Endothelial cell of umbilical vein (primary cell): ENCODE measurements at regions of chr5 and their contacts with region 1.

Region 1: GRCh38 chr5:173057062-173057924 is 1.1 kb downstream of the CREBRF start:
- DNase-seq: peak; percentile 99
- H3K4me3 ChIP-seq: peak overlapping the region; percentile 83 to 89 (median 86)
- H3K27ac ChIP-seq: peak overlapping the region; percentile 86
- H3K4me1 ChIP-seq: peaks cover 13% of the 10 kb centered on the region
- H3K27me3 ChIP-seq: no peaks in the 10 kb centered on the region
- CTCF ChIP-seq: peak in 1 of 2 donors; percentile 28
- POLR2A ChIP-seq: peak; percentile 37

Region 2: DNA sequence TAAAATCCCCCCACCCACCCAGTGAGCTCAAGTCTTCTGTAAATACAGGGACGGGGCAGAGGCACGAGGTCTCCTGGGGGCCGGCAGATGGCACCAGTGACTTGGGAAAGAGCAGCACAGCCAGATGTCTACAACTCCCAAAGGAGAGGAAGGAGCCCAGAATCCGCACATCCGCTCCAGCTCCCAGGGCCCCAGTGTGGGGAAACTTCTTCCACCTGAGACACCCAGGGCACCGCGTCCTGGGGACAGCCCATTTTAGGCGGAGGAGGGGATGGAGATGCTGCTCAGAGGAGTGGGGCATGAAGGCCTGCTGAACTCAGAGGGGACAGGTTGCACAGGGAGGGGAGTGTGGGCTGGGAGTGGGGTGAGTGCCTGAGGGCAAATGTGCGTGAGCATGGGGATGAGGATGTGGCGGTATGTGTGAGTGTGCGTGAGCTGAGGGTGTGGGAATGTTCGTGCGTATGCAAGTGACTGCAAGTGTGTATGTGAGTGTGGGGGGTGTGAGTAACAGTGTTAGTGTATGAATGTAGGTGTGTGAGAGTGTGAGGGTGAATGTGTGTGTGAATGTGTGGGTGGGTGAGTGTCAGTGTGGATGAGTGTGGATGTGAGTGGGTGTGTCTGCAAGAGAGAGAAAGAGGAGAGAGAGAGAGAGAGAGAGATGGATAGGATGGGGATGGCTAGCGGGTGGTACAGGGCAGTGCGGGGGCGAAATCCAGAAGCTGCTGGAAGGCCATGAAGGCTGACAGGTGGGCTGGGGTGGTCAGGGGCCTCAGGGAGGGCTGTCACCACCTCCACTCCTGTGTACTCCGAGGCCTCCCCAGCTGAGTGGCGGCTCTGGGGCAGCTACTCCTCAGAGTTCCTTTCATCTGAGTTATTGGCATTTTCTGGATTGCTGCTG is 349.8 kb before region 1 on chr5:
- CTCF ChIA-PET with region 1: interaction called, 4 read pairs
- POLR2A ChIA-PET with region 1: no interaction called
- dilution Hi-C with region 1: no loop called
- intact Hi-C with region 1: loop called (anchors 2 kb)
- DNase-seq: peak; percentile 62
- H3K4me3 ChIP-seq: no peak overlapping the region
- H3K27ac ChIP-seq: no peak overlapping the region
- H3K4me1 ChIP-seq: no peaks in the 10 kb centered on the region
- H3K27me3 ChIP-seq: no peaks in the 10 kb centered on the region
- CTCF ChIP-seq: peak; percentile 61 to 64
- POLR2A ChIP-seq: no peak

Region 3: DNA sequence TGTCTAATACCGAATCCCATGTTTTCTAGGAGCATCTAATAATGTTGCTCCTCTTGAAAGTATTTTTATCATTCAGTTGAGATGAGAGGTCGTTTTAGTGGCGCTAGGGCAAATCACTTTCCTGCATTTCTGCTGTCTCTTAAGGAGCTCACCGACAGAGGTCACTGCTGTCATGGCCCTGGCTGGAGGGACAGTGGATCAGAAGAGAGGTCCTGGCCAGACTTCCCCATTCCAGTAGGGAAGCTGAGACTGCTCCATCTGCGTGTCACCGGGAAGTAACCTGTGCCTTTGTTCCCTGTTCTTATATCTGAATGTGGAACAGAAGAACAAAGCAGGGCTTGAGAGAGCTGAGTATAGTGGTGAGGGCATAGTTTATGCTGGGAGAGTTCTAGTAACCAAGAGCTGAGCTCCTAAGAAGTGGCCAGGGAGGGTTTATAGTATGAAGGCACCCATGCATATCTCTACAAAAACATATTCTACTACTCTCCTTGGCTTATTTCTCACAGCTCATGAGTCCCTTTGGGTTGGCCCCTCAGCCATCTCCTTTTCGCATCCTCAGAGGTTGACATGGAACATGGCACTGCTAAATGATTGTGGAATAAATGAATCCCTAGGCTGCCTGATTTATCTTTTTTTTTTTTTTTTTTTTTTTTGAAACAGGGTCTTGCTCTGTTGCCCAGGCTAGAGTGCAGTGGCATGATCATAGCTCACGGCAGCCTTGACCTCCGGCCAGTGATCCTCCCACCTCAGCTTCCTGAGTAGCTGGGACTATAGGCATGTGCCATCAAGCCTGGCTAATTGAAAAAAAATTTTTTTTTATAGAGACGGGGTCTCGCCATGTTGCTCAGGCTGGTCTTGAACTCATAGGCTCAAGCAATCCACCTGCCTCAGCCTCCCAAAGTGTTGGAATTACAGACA is 46.5 kb before region 1 on chr5:
- CTCF ChIA-PET with region 1: interaction called, 14 read pairs
- POLR2A ChIA-PET with region 1: interaction called, 3 read pairs
- dilution Hi-C with region 1: no loop called
- intact Hi-C with region 1: loop called (anchors 1 kb)
- DNase-seq: peak; percentile 75
- H3K4me3 ChIP-seq: no peak overlapping the region
- H3K27ac ChIP-seq: no peak overlapping the region
- H3K4me1 ChIP-seq: peaks cover 2% of the 10 kb centered on the region
- H3K27me3 ChIP-seq: no peaks in the 10 kb centered on the region
- CTCF ChIP-seq: peak; percentile 41 to 52
- POLR2A ChIP-seq: no peak

Region 4: DNA sequence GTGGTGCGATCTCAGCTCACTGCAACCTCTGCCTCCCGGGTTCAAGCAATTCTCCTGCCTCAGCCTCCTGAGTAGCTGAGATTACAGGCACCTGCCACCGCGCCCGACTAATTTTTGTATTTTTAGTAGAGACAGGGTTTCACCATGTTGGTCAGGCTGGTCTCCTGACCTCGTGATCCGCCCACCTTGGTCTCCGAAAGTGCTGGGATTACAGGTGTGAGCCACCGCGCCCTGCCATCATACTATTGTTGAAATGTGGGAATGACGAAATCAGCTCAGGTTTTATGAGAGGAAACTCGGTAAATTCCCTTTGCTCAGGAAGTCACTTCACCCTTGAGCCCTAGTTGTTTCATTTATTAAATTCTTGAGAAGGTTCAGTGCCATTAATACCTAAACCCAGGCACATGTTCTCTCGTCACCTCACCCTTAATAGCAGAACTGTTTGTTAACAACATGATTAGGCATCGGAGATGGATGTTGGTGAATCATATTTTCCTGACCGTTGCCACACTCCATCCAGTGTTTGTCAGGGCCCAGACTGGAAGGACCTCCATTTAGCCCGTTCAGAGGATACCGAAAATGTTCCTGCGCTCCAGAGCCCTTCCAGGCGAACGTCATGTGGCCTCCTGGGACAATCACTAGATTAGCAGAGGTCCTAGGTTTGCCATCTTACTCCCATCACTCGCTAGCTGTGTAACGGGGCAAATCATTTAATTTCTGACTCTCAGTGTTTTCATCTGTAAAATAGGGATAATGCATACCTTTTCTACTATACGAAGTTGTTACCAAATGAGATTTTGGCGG is 21.2 kb before region 1 on chr5:
- CTCF ChIA-PET with region 1: interaction called, 10 read pairs
- POLR2A ChIA-PET with region 1: no interaction called
- dilution Hi-C with region 1: no loop called
- intact Hi-C with region 1: no loop called
- DNase-seq: peak; percentile 36
- H3K4me3 ChIP-seq: no peak overlapping the region
- H3K27ac ChIP-seq: peak overlapping the region; percentile 36
- H3K4me1 ChIP-seq: peaks cover 14% of the 10 kb centered on the region
- H3K27me3 ChIP-seq: no peaks in the 10 kb centered on the region
- CTCF ChIP-seq: no peak
- POLR2A ChIP-seq: no peak

Region 5: DNA sequence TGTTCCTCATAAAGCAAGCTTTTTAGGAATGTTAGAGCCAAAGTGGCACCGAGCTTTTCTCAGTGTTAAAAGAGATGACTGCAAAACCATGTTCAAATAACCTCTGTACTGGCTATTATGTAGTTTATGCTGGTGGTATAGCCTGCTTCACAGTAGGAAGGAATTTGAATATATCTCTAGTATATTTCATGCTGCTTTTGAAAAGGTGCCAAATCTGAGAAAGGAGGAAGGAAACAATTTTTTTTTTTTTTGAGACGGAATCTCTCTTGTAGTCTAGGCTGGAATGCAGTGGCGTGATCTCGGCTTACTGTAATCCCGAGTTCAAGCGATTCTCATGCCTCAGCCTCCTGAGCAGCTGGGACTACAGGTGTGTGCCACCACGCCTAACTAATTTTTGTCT is 12.4 kb after region 1 on chr5:
- CTCF ChIA-PET with region 1: no interaction called
- POLR2A ChIA-PET with region 1: no interaction called
- dilution Hi-C with region 1: no loop called
- intact Hi-C with region 1: no loop called
- DNase-seq: peak; percentile 51
- H3K4me3 ChIP-seq: no peak overlapping the region
- H3K27ac ChIP-seq: no peak overlapping the region
- H3K4me1 ChIP-seq: no peaks in the 10 kb centered on the region
- H3K27me3 ChIP-seq: no peaks in the 10 kb centered on the region
- CTCF ChIP-seq: no peak
- POLR2A ChIP-seq: no peak

Region 6: GRCh38 chr5:173144200-173145176 is 87.2 kb after region 1 on chr5 and contains the start of gene BNIP1:
- CTCF ChIA-PET with region 1: interaction called, 11 read pairs
- POLR2A ChIA-PET with region 1: interaction called, 5 read pairs
- dilution Hi-C with region 1: no loop called
- intact Hi-C with region 1: loop called (anchors 1 kb)
- DNase-seq: peak; percentile 95
- H3K4me3 ChIP-seq: peak within 1 kb of the TSS; percentile 77 to 97 (median 89)
- H3K27ac ChIP-seq: peak within 1 kb of the TSS; percentile 89
- H3K4me1 ChIP-seq: peaks cover 4% of the 10 kb centered on the region
- H3K27me3 ChIP-seq: no peaks in the 10 kb centered on the region
- CTCF ChIP-seq: peak; percentile 98
- POLR2A ChIP-seq: peak; percentile 73
- total RNA-seq, gene BNIP1: 15.7 and 19.7 TPM in 2 replicates

Region 7: DNA sequence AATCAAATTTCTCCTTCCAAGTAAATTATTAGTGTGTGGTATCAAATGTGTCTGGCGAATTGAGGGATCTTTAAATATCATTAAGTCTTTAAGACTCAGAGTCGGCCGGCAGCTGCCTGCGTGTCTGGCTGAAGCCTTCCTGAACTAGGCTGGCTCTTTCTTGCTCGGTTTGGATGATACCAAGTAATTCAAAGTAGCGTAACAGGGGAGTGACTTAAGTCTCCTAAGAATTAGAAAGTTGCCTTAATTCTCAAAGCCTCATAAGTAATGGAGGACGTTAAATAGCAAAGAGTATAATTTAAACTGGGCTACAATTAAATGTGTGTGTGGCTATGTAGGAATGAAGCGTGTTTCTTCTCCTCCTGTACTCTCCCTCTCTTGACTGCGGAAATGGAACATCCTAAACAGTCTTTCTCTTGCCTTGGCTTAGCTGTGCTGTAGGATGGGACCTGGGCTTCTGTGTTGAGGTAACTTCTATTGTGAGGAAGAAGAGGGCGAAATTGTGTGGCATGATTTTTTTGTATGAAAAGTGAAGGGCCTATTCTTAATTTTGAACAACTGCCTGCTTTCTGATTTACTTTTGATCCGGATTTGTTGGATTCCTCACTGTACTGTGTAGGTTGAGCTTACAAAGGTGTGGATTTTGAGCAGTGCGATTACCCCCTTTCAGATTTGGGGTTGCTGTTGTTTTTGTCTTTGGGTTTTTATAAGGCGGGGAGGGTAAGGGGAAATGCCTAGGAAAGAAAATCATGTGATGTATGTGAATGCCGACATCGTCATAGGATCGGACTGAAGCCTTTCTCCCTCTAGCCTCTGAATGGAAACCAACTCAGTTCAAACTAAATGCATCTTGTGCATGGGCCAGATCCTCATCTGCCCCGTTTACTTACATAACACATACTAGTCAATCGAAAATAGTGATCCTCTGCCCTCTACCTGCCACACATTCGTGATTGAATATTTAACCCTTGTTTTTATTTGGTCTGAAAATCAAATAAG is 860.8 kb after region 1 on chr5:
- CTCF ChIA-PET with region 1: no interaction called
- POLR2A ChIA-PET with region 1: no interaction called
- dilution Hi-C with region 1: no loop called
- intact Hi-C with region 1: loop called (anchors 5 kb)
- DNase-seq: peak; percentile 93
- H3K4me3 ChIP-seq: peak overlapping the region; percentile 44 to 93 (median 65)
- H3K27ac ChIP-seq: peak overlapping the region; percentile 99
- H3K4me1 ChIP-seq: peaks cover 28% of the 10 kb centered on the region
- H3K27me3 ChIP-seq: no peaks in the 10 kb centered on the region
- CTCF ChIP-seq: no peak
- POLR2A ChIP-seq: peak; percentile 94